Caco-2 (cell line): ENCODE measurements at regions of chr10 and their contacts with region 1.

Region 1: GRCh38 chr10:44974628-44975431 is 3.8 kb downstream of the DEPP1 start:
- DNase-seq: peak; percentile 74 to 87
- H3K4me3 ChIP-seq: peak overlapping the region; percentile 42
- H3K4me3 Mint-ChIP-seq: peak overlapping the region; percentile 70
- H3K27ac Mint-ChIP-seq: peak overlapping the region; percentile 57
- H3K4me1 ChIP-seq: peaks cover 67% of the 10 kb centered on the region
- H3K4me1 Mint-ChIP-seq: peaks cover 30% of the 10 kb centered on the region
- H3K27me3 ChIP-seq: no peaks in the 10 kb centered on the region
- H3K27me3 Mint-ChIP-seq: no peaks in the 10 kb centered on the region
- CTCF ChIP-seq: peak; percentile 80 to 98

Region 2: DNA sequence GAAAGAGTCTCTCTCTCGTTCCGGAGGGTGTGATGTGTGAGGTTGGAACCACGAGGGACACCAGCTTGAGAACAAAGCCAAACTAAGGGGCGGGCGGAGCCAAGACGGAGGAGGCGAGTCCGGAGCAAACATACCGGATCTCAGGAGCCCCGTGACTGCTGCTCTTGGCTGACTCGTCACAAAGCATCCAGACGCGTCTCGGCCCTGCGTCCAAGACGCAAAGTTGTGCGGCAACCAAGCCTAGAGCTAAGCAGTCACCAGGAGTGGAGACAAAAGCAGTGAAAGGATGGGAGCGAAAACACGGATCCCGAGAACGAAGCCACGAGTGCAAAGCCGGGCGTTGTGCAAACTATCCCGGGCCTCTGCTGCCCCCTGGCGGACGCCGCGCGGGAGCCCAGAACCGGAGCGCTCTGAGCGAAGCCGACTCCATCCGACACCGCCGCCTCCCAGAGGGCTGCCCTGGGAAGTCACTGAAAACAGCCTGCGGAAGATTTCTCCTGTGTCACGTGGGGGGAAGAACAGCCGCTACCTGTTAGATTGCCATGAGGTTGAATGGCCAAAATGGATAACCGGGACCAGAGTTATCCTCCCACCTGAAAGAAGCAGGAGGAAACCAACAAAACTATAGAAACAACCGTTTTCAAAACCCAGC is 110.1 kb before region 1 on chr10:
- CTCF ChIA-PET with region 1: interaction called, 6 read pairs
- POLR2A ChIA-PET with region 1: interaction called, 3 read pairs
- intact Hi-C with region 1: loop called (anchors 5 kb)
- DNase-seq: peak; percentile 91 to 98
- H3K4me3 ChIP-seq: peak overlapping the region; percentile 46
- H3K4me3 Mint-ChIP-seq: peak overlapping the region; percentile 84
- H3K27ac Mint-ChIP-seq: peak overlapping the region; percentile 77
- H3K4me1 ChIP-seq: peaks cover 15% of the 10 kb centered on the region
- H3K4me1 Mint-ChIP-seq: peaks cover 11% of the 10 kb centered on the region
- H3K27me3 ChIP-seq: peaks cover 4% of the 10 kb centered on the region; the same call in 1 of the 2 replicates
- H3K27me3 Mint-ChIP-seq: peaks cover 34% of the 10 kb centered on the region
- CTCF ChIP-seq: peak; percentile 98 to 99

Region 3: GRCh38 chr10:44932517-44933450 is 42.0 kb before region 1 on chr10:
- CTCF ChIA-PET with region 1: interaction called, 36 read pairs
- POLR2A ChIA-PET with region 1: interaction called, 10 read pairs
- intact Hi-C with region 1: loop called (anchors 1 kb)
- DNase-seq: peak; percentile 92 to 97
- H3K4me3 ChIP-seq: no peak overlapping the region
- H3K4me3 Mint-ChIP-seq: no peak overlapping the region
- H3K27ac Mint-ChIP-seq: no peak overlapping the region
- H3K4me1 ChIP-seq: peaks cover 28% of the 10 kb centered on the region
- H3K4me1 Mint-ChIP-seq: peaks cover 20% of the 10 kb centered on the region
- H3K27me3 ChIP-seq: no peaks in the 10 kb centered on the region
- H3K27me3 Mint-ChIP-seq: peaks cover 5% of the 10 kb centered on the region
- CTCF ChIP-seq: peak; percentile 98 to 99

Region 4: GRCh38 chr10:44952779-44953231 is 22.0 kb before region 1 on chr10:
- CTCF ChIA-PET with region 1: interaction called, 4 read pairs
- POLR2A ChIA-PET with region 1: interaction called, 10 read pairs
- intact Hi-C with region 1: loop called (anchors 1 kb)
- DNase-seq: peak; percentile 76 to 85
- H3K4me3 ChIP-seq: no peak overlapping the region
- H3K4me3 Mint-ChIP-seq: peak overlapping the region; percentile 21
- H3K27ac Mint-ChIP-seq: peak overlapping the region; percentile 8
- H3K4me1 ChIP-seq: peaks cover 55% of the 10 kb centered on the region
- H3K4me1 Mint-ChIP-seq: peaks cover 47% of the 10 kb centered on the region
- H3K27me3 ChIP-seq: no peaks in the 10 kb centered on the region
- H3K27me3 Mint-ChIP-seq: no peaks in the 10 kb centered on the region
- CTCF ChIP-seq: no peak

Region 5: GRCh38 chr10:44959247-44960087 is 15.4 kb before region 1 on chr10 and contains the start of gene RASSF4:
- CTCF ChIA-PET with region 1: interaction called, 11 read pairs
- POLR2A ChIA-PET with region 1: interaction called, 23 read pairs
- intact Hi-C with region 1: loop called (anchors 2 kb)
- DNase-seq: peak; percentile 97 to 99
- H3K4me3 ChIP-seq: peak within 1 kb of the TSS; percentile 82
- H3K4me3 Mint-ChIP-seq: peak within 1 kb of the TSS; percentile 78
- H3K27ac Mint-ChIP-seq: peak within 1 kb of the TSS; percentile 79
- H3K4me1 ChIP-seq: peaks cover 41% of the 10 kb centered on the region
- H3K4me1 Mint-ChIP-seq: peaks cover 40% of the 10 kb centered on the region
- H3K27me3 ChIP-seq: no peaks in the 10 kb centered on the region
- H3K27me3 Mint-ChIP-seq: no peaks in the 10 kb centered on the region
- CTCF ChIP-seq: no peak
- total RNA-seq, gene RASSF4: 40.8 and 55.6 TPM in 2 replicates

Region 6: DNA sequence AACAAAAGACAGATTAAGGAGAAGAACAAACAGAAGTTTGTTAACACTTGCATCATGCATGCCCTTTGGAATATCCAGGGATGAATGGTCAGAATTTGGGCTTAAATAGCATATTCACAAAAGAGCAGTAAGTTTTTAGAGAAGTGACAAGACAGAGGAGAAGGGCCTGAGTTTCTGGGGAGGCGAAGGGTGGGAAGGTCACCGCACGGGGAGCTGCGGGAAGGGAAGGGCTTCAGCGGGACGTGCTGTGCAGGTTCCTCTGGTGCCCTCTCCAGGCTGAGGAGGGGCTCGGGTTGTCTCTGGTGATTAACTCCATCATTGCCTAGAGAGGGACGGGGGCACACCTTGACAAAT is 15.4 kb after region 1 on chr10:
- CTCF ChIA-PET with region 1: interaction called, 16 read pairs
- POLR2A ChIA-PET with region 1: interaction called, 20 read pairs
- intact Hi-C with region 1: loop called (anchors 1 kb)
- DNase-seq: peak; percentile 76 to 86
- H3K4me3 ChIP-seq: no peak overlapping the region
- H3K4me3 Mint-ChIP-seq: peak overlapping the region; percentile 37
- H3K27ac Mint-ChIP-seq: peak overlapping the region; percentile 86
- H3K4me1 ChIP-seq: peaks cover 51% of the 10 kb centered on the region
- H3K4me1 Mint-ChIP-seq: peaks cover 48% of the 10 kb centered on the region
- H3K27me3 ChIP-seq: no peaks in the 10 kb centered on the region
- H3K27me3 Mint-ChIP-seq: no peaks in the 10 kb centered on the region
- CTCF ChIP-seq: peak; percentile 93 to 95

Region 7: DNA sequence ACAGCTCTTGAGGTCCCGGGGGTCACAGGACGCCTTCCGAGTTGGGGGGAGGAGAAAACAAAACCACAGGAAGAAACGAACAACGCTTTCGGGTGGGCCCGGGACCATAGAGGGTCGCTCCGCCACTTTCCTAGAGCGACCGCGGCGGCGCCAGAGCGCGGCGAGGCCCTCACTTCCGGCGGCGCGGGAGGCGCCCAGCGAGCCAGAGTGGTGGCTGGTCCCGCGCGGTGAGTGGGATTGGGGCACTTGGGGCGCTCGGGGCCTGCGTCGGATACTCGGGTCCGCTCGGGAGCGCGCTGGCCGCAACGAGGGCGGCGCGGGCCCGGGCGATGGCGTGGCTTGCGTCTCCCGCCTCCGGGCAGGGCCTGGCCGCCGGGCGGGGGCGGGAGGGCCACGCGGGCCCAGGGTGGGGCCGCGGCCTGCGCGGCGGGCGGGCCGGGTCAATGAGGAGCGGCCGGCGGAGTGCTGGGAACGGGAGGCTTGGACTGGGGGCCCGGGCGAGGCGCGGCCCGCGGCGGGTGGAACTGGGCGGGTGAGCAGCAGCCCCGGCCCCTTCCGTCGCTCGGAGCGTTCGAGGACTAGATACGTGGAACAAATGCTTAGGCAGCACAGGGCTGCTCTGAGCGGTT is 26.0 kb after region 1 on chr10 and contains the start of gene ZNF22:
- CTCF ChIA-PET with region 1: interaction called, 3 read pairs
- POLR2A ChIA-PET with region 1: interaction called, 28 read pairs
- intact Hi-C with region 1: loop called (anchors 1 kb)
- DNase-seq: peak; percentile 86 to 91
- H3K4me3 ChIP-seq: peak within 1 kb of the TSS; percentile 84
- H3K4me3 Mint-ChIP-seq: peak within 1 kb of the TSS; percentile 82
- H3K27ac Mint-ChIP-seq: peak within 1 kb of the TSS; percentile 94
- H3K4me1 ChIP-seq: peaks cover 31% of the 10 kb centered on the region
- H3K4me1 Mint-ChIP-seq: peaks cover 28% of the 10 kb centered on the region
- H3K27me3 ChIP-seq: no peaks in the 10 kb centered on the region
- H3K27me3 Mint-ChIP-seq: no peaks in the 10 kb centered on the region
- CTCF ChIP-seq: peak in 1 of 2 experiments; percentile 35
- total RNA-seq, gene ZNF22: 46.5 and 60.8 TPM in 2 replicates